IMR-90 (cell line): ENCODE measurements at regions of chr10 and their contacts with region 1.

Region 1: DNA sequence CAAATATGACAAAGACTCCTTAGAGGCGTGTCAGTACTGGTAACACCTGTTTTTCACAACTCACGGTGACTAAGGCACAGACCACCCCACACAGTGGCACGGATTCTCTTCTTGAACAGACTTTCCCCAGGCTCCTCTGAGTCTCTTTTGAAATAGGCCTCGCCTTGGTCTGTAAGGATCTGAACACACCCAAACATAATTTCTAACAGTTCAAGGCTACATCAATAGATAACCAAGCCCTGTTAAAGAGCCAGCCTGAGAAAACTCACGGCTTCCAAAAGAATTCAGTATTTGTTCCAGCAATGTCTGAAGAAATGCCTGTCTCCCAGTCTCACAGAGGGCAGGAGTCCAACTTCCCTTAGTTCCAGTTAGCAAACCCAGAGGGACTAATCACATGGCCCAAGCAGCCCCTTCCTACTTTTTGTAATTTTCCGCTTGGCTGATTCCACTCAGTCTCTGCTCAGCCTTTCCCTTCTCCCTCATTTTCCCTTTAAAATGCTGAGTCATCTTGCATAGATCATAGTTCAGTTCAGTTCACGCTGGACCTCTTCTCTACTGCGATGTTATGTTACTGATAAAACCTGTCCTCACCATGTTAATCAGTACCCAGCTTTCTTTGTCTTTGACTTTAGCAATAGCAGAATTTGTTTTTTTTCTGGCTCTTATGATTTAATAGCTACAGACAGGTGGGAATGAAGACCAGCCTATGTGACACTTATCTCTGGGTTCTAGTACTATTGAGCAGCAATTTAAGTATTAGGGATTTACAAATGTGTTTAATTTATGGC is 22.6 kb upstream of the AKR1C3 start:
- DNase-seq: peak; percentile 63
- ATAC-seq: peak; percentile 85
- H3K4me3 ChIP-seq: no peak overlapping the region
- H3K27ac ChIP-seq: peak overlapping the region; percentile 43; the same call in 1 of the 2 replicates
- H3K4me1 ChIP-seq: no peaks in the 10 kb centered on the region; the same call in 1 of the 2 replicates
- H3K27me3 ChIP-seq: no peaks in the 10 kb centered on the region
- CTCF ChIP-seq: no peak
- POLR2A ChIP-seq: no peak
- RAD21 ChIP-seq: no peak

Region 2: DNA sequence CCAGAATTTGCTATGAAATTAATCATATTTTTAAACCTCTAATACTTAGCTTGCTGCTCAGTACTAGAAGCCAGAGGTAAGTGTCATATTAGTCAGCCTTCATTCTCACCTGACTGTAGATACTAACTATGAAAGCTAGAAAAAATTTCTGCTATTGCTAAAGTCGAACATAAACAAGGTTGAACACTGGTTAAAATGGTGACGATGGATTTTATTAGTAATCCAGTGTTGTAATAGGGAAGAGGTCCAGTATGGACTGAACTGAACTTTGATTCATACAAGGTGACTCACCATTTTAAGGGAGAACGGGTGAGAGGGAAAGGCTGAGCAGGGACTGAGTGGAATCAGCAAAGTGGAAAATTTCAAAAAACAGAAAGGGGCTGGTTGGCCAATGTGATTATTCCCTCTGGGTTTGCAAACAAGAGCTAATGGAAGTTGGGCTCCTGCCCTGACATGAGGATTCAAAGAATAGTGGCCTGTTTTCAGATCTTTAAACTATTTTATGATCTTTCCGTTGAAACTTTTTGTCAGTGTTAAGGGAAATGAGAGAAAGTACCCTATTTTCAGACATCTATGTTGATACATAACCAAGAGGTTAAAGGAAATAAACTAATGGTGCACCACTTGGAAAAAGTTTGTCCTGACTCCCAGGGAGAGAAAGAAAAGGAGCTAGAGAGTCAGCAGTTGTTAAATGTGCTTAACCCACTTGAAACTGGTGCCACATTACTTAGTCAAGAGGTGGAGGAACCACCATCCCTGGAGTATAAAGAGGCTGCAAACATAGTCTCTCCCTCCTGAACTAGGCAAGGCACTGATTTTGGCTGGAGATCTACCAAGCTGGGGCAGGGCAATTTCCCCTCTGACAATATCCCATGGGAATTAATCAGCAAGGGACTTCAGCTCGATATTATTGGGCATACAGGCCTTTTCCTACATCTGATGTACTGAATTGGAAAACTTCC is 123.7 kb before region 1 on chr10:
- CTCF ChIA-PET with region 1: no interaction called
- POLR2A ChIA-PET with region 1: no interaction called
- dilution Hi-C with region 1: no loop called
- in situ Hi-C with region 1: no loop called
- intact Hi-C with region 1: loop called (anchors 5 kb)
- DNase-seq: peak; percentile 97
- ATAC-seq: peak; percentile 80
- H3K4me3 ChIP-seq: no peak overlapping the region
- H3K27ac ChIP-seq: peak overlapping the region; percentile 94
- H3K4me1 ChIP-seq: peaks cover 22% of the 10 kb centered on the region
- H3K27me3 ChIP-seq: no peaks in the 10 kb centered on the region
- CTCF ChIP-seq: no peak
- POLR2A ChIP-seq: no peak
- RAD21 ChIP-seq: no peak

Region 3: GRCh38 chr10:5147255-5147980 is 75.8 kb after region 1 on chr10:
- CTCF ChIA-PET with region 1: no interaction called
- POLR2A ChIA-PET with region 1: no interaction called
- dilution Hi-C with region 1: no loop called
- in situ Hi-C with region 1: no loop called
- intact Hi-C with region 1: loop called (anchors 2 kb)
- DNase-seq: no peak
- ATAC-seq: no peak
- H3K4me3 ChIP-seq: no peak overlapping the region
- H3K27ac ChIP-seq: no peak overlapping the region
- H3K4me1 ChIP-seq: no peaks in the 10 kb centered on the region
- H3K27me3 ChIP-seq: no peaks in the 10 kb centered on the region
- CTCF ChIP-seq: no peak
- POLR2A ChIP-seq: no peak
- RAD21 ChIP-seq: no peak